Breast epithelium (tissue), 4 donors: ENCODE measurements at regions of chr7 and their contacts with region 1.

Region 1: DNA sequence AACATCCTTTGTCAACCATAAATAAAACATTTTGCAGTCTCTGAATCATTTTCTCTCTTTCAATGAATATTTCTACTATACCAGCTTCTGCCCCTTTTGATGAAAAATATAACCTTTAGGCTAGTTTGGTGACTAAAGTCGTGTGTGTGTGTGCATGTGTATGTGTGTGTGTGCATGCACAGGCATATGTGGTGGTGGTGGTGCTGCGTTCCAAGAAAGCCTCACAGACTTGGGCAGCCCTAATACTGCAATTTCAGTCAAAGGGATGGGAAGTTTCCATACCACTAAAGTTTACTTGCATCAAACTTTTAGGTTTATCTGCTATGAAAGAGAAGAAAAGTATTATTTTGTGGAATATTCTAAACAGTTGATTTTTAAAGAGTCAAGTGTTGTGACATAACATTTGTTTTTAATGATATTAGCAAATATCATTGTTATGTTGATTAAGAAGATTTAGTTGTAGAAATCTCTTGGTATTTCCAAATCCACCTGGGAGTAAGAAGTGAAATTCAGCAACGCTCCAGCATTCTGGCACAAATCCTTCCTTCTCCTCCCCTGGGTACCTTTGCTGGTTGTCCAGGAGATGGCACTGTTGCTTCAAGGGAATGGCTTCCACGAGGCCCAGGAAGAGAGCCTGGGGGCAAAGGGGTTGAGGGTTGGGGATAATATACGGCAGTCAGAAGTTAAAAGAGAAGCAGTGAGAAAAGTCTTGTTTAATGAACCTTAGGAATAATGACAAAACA is 41.5 kb downstream of the ASB4 start:
- DNase-seq: peak in 1 of 2 donors; percentile 42
- H3K4me3 ChIP-seq: no peak overlapping the region
- H3K27ac ChIP-seq: no peak overlapping the region
- H3K4me1 ChIP-seq: no peaks in the 10 kb centered on the region
- H3K27me3 ChIP-seq: no peaks in the 10 kb centered on the region
- CTCF ChIP-seq: peak; percentile 73 to 93 (median 89)
- POLR2A ChIP-seq: no peak

Region 2: GRCh38 chr7:95511716-95512260 is 15.4 kb before region 1 on chr7:
- intact Hi-C with region 1: no loop called
- DNase-seq: peak; percentile 46 to 67
- H3K4me3 ChIP-seq: no peak overlapping the region
- H3K27ac ChIP-seq: no peak overlapping the region
- H3K4me1 ChIP-seq: no peaks in the 10 kb centered on the region
- H3K27me3 ChIP-seq: no peaks in the 10 kb centered on the region
- CTCF ChIP-seq: peak; percentile 66 to 87 (median 81)
- POLR2A ChIP-seq: no peak

Region 3: GRCh38 chr7:95686109-95686508 is 158.9 kb after region 1 on chr7:
- intact Hi-C with region 1: loop called (anchors 5 kb)
- DNase-seq: peak in 1 of 2 donors; percentile 32
- H3K4me3 ChIP-seq: no peak overlapping the region
- H3K27ac ChIP-seq: no peak overlapping the region
- H3K4me1 ChIP-seq: no peaks in the 10 kb centered on the region
- H3K27me3 ChIP-seq: no peaks in the 10 kb centered on the region
- CTCF ChIP-seq: peak; percentile 56 to 74 (median 72)
- POLR2A ChIP-seq: no peak